Activated B cell treated with CpG ODN at 0.5 μM for 24 hours (primary cell): ENCODE measurements at regions of chr7 and their contacts with region 1.

Region 1: DNA sequence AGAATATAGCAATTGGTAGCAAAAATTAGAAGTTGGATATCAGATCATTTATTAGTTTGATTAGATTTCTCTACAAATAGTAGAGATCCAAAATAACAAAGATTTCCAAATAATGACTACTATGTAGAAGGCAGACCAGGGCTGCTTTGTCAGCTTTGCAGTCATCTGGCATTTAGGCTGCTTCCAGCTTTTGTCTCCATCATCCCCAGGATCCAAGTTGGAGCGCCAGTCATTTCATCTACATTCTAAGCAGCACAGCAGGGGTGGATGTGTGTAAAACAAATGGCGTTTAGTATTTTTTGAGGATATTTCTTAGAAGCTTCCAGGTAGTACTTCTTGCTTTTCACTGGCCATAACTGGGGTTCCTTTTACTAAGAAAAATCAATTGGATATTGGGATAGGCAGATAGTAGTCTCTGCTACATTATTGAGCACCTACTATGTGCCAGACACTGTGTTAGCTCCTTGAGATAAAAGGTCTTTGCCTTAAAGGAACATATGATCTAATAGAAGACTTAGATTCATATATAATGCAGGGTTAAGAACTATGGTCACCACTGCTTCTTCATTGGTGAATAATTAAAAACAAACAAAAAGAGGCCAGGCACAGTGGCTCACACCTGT is 41.5 kb downstream of the TPST1 start:
- DNase-seq: no peak
- ATAC-seq: no peak
- H3K4me3 Mint-ChIP-seq: no peak overlapping the region
- H3K27ac Mint-ChIP-seq: no peak overlapping the region
- H3K4me1 Mint-ChIP-seq: peaks cover 2% of the 10 kb centered on the region
- H3K27me3 Mint-ChIP-seq: no peaks in the 10 kb centered on the region
- CTCF ChIP-seq: no peak

Region 2: DNA sequence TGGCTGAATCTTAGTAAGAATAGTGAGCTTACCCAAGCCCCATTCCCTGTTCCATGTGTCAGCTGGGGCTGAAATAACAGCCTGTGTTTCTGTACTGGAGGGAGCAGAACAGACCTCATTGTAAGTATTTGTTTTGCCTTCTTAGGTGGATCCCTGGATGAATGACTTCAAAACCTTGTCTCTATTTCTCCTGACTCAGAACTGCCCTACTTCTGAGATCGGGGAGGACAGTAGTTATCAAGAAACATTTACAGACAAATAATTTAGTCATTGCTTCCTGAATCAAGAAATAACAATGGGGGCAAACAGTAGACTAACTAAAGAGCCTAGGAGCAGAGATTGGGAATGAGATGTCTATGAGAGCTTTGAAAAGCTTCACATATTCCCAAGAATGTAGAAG is 17.3 kb after region 1 on chr7:
- CTCF ChIA-PET with region 1: no interaction called
- POLR2A ChIA-PET with region 1: interaction called, 17 read pairs
- intact Hi-C with region 1: no loop called
- DNase-seq: no peak
- ATAC-seq: no peak
- H3K4me3 Mint-ChIP-seq: no peak overlapping the region
- H3K27ac Mint-ChIP-seq: no peak overlapping the region
- H3K4me1 Mint-ChIP-seq: no peaks in the 10 kb centered on the region
- H3K27me3 Mint-ChIP-seq: peaks cover under 1% of the 10 kb centered on the region
- CTCF ChIP-seq: no peak

Region 3: GRCh38 chr7:66281678-66282590 is 35.3 kb after region 1 on chr7:
- CTCF ChIA-PET with region 1: no interaction called
- POLR2A ChIA-PET with region 1: no interaction called
- intact Hi-C with region 1: loop called (anchors 1 kb)
- DNase-seq: no peak
- ATAC-seq: no peak
- H3K4me3 Mint-ChIP-seq: no peak overlapping the region
- H3K27ac Mint-ChIP-seq: no peak overlapping the region
- H3K4me1 Mint-ChIP-seq: peaks cover 8% of the 10 kb centered on the region
- H3K27me3 Mint-ChIP-seq: no peaks in the 10 kb centered on the region
- CTCF ChIP-seq: no peak